ENCODE measurements at regions of chr19 and their contacts with region 1.

Region 1: DNA sequence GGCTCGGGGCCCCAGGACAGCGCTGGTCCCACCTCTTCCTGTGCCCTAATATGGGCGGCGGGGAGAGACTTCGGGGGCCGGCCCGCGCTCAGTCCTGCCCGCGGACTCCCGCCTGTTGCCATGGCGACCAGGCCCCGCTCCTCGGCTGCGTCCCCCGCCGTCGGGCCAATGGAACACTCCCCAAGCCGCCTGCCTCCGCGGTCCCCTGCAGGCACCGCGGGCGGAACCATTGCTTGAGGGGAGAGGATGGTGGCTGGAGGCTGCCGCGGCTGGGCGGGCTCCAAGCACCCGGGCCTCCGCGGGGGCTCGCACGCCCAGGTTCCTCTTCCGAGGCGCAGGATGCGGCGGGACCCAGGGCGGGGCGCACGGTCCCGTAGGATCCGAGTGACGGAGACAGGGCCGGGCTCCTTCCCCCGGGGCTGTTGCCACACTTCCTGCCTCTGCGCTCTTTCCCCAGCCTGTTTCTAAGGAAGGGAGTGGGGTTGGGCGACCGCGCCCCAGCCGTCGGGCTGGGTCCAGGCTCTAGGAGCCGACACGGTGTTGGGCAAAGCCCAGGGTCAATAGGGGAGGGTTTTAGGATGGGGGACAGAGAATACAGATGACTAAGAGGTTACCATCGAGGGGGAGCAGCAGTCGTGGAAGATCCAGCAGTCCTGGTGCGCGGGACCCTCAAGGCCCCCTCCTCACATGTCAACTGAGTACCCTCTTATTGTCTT is 1.2 kb upstream of the JUNB start:
- DNase-seq: peak; percentile 92 to 98
- H3K4me3 ChIP-seq: peak overlapping the region; percentile 83 to 90
- H3K27ac ChIP-seq: peak overlapping the region; percentile 95 to 96
- H3K4me1 ChIP-seq: peaks cover 31 to 41% of the 10 kb centered on the region in 2 donors
- H3K27me3 ChIP-seq: no peaks in the 10 kb centered on the region
- CTCF ChIP-seq: no peak

Region 2: GRCh38 chr19:11535792-11536595 is 1254.1 kb before region 1 on chr19:
- intact Hi-C with region 1: loop called (anchors 10 kb)
- DNase-seq: peak; percentile 78 to 96
- H3K4me3 ChIP-seq: peak overlapping the region; percentile 37 to 55
- H3K27ac ChIP-seq: peak overlapping the region; percentile 95 to 97
- H3K4me1 ChIP-seq: peaks cover 7 to 20% of the 10 kb centered on the region in 2 donors
- H3K27me3 ChIP-seq: no peaks in the 10 kb centered on the region
- CTCF ChIP-seq: peak; percentile 91 to 98 (median 93)

Region 3: DNA sequence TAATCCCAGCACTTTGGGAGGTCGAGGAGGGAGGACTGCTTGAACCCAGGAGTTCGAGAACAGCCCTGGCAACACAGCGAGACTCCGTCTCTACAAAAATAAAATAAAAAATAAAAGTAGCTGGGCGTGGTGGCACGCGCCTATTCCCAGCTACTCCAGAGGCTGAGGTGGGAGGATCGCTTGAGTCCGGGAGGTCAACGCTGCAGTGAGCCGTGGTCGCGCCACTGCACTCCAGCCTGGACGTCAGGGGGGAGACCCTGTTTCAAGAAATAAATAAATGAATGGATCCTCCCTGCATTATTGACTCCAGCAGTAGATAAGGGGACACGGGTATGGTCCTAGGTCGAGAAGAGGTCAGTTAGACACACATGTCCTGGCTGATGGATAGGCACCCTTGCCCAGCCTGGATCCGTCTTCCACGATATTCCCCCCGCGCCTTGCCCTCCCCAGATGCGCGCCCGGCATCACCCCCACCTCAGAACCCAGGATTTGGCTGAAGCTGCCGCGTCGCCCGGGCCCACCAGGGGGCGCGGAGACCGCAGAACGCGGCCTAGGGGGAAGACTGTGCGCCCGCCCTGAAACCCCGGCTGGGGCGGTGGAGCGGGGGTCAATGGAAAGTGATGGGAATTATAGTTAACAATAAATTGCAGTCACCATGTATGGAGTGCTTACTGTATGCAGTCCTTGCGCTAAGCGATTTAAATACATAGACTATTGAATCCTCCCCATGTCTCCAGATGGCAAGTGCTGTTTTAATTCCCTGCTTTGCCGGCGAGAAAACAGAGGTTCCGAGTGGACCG is 12.6 kb before region 1 on chr19:
- intact Hi-C with region 1: loop called (anchors 1 kb)
- DNase-seq: peak; percentile 43 to 89
- H3K4me3 ChIP-seq: peak overlapping the region; percentile 68 to 70
- H3K27ac ChIP-seq: peak overlapping the region; percentile 93 to 96
- H3K4me1 ChIP-seq: peaks cover 21 to 49% of the 10 kb centered on the region in 2 donors
- H3K27me3 ChIP-seq: no peaks in the 10 kb centered on the region
- CTCF ChIP-seq: peak; percentile 97 to 98 (median 98)

Region 4: DNA sequence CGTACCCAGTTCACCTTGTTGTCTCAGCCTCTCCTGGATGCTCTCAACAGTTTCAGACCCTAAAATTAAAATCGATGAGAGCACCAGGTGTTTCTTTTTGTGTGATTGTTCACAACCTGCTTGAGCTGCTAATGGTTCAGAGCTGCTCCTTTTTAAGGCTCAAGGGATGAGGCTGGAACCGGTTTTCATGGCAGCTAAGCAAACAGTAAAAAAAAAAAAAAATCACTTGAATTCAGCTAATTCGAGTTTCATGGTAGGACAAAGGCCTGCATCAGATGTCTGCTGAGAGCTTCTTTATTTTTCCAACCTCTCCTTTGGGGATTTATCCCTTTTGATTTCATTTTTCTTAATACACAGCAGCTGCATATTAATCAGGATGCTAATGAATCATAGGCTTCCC is 122.5 kb after region 1 on chr19:
- intact Hi-C with region 1: no loop called
- DNase-seq: no peak
- H3K4me3 ChIP-seq: peak overlapping the region; percentile 0 to 48
- H3K27ac ChIP-seq: peak overlapping the region in 1 of 2 donors; percentile 55
- H3K4me1 ChIP-seq: peaks cover 3 to 12% of the 10 kb centered on the region in 2 donors
- H3K27me3 ChIP-seq: no peaks in the 10 kb centered on the region
- CTCF ChIP-seq: no peak

Region 5: DNA sequence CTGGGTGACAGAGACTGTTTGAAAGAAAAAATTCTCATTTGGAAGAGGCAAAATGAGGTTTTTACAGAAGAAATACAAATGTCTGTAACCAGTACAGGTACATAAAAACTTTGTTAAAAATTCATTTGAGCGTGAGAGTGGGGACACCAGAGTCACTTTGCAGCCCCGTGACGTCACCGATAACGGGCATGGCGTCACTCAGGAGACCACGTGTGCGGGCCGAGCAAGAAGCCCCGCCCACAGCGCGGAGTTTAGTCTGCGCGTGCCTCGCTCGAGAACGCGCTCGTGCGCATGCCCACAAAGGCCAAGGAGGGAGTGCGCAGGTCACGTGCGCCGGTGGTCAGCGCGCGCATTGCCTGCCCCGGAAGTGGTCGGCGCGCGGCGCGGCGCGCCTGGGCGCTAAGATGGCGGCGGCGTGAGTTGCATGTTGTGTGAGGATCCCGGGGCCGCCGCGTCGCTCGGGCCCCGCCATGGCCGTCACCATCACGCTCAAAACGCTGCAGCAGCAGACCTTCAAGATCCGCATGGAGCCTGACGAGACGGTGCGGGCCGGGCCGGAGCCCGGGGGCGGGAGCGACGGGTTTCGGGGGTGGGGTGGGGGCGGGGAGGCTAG is 155.5 kb after region 1 on chr19 and contains the start of gene RAD23A:
- intact Hi-C with region 1: loop called (anchors 5 kb)
- DNase-seq: peak; percentile 89 to 99
- H3K4me3 ChIP-seq: peak within 1 kb of the TSS; percentile 97 to 100
- H3K27ac ChIP-seq: peak within 1 kb of the TSS; percentile 96 to 99
- H3K4me1 ChIP-seq: peaks cover 12 to 30% of the 10 kb centered on the region in 2 donors
- H3K27me3 ChIP-seq: no peaks in the 10 kb centered on the region
- CTCF ChIP-seq: no peak
- total RNA-seq, gene RAD23A: 146 TPM

Region 6: DNA sequence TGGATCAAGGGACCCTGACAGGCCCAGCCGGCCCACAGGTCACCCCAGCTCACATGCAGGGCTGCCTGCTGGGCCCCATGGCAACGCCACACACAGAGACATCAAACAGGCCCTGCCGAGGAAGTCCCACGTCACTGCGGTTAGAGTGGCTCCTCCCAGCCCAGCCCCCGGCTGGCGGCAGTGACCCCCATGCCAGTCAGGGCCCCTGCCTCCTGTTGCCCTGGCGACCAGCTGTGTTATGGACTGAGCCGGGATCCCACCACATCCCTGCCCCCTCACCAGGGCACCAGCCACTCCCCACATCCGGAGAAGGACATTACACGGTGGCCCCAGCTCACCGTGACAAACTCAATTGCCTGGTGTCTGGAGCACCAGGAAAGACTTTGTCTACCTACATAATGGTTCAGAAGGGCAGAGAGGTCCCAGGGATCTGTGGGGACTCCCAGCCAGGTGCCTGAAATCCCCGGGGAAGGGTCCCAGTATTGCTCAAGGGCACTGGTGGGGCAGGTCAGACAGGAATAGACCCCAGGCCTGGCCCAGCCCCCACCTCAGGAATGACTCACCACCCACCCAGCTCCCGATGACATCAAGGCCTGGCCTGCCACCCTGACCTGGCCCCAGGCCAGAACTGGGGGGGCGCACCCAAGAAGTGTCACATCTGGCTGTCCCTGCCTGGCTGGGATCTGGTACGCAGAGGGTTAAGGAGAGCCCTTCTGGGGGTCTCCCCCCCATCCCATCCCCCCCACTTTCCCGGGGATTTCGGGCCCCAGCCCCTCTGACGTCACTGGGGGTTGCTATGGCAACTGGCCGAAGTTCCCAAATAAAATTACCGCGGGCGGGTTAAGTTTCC is 1056.7 kb after region 1 on chr19:
- intact Hi-C with region 1: loop called (anchors 5 kb)
- DNase-seq: peak; percentile 91 to 98
- H3K4me3 ChIP-seq: peak overlapping the region; percentile 50 to 70
- H3K27ac ChIP-seq: peak overlapping the region; percentile 99 to 100
- H3K4me1 ChIP-seq: peaks cover 20 to 59% of the 10 kb centered on the region in 2 donors
- H3K27me3 ChIP-seq: no peaks in the 10 kb centered on the region
- CTCF ChIP-seq: no peak

Measured in ascending aorta (tissue), 2 donors.